Left ventricle myocardium inferior (tissue), 1 donor: ENCODE measurements at regions of chr10 and their contacts with region 1.

Region 1: GRCh38 chr10:76547352-76547972 is 1090.1 kb downstream of the KCNMA1 start:
- DNase-seq: peak; percentile 71
- H3K4me3 ChIP-seq: peak overlapping the region; percentile 20
- H3K27ac ChIP-seq: no peak overlapping the region
- H3K4me1 ChIP-seq: peaks cover 10% of the 10 kb centered on the region
- H3K27me3 ChIP-seq: no peaks in the 10 kb centered on the region
- CTCF ChIP-seq: peak; percentile 88

Region 2: GRCh38 chr10:76311752-76312636 is 235.5 kb before region 1 on chr10:
- intact Hi-C with region 1: loop called (anchors 10 kb)
- DNase-seq: no peak
- H3K4me3 ChIP-seq: no peak overlapping the region
- H3K27ac ChIP-seq: peak overlapping the region; percentile 77
- H3K4me1 ChIP-seq: peaks cover 39% of the 10 kb centered on the region
- H3K27me3 ChIP-seq: no peaks in the 10 kb centered on the region
- CTCF ChIP-seq: peak; percentile 58

Region 3: GRCh38 chr10:76456190-76456589 is 91.3 kb before region 1 on chr10:
- intact Hi-C with region 1: no loop called
- DNase-seq: no peak
- H3K4me3 ChIP-seq: no peak overlapping the region
- H3K27ac ChIP-seq: peak overlapping the region; percentile 52
- H3K4me1 ChIP-seq: peaks cover 28% of the 10 kb centered on the region
- H3K27me3 ChIP-seq: no peaks in the 10 kb centered on the region
- CTCF ChIP-seq: no peak

Region 4: DNA sequence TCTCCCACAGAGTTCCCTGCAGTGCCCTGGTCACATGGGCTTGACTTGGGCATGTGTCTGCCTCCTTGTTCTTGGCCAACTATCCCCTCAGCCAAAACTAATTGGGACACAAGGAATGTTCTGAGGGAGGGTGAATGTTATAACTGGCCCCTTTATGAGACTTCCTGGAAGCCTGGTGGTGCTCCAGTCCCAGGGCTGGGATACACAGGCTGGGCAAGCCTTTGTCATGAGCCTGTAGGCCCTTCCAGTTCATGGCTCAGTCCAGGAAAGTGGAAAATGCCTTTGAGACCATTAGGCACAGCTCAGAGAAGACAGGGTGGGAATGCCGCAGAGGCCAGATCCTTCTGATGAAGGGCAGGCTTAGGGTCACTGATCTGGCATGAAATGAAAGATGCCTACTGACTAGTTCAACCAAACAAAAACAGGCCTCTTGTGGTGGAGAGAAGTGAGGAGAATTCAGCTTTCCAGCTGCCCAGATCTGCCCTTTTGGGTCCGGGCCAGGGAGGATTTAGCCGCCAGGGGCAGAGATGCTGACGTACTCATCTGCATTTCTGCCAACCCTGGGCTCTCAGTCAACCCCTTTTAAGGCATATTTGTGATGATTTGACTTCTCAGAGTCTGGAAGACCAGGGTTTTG is 128.6 kb after region 1 on chr10:
- intact Hi-C with region 1: no loop called
- DNase-seq: peak; percentile 55
- H3K4me3 ChIP-seq: no peak overlapping the region
- H3K27ac ChIP-seq: peak overlapping the region; percentile 63
- H3K4me1 ChIP-seq: no peaks in the 10 kb centered on the region
- H3K27me3 ChIP-seq: peaks cover 6% of the 10 kb centered on the region
- CTCF ChIP-seq: no peak

Region 5: DNA sequence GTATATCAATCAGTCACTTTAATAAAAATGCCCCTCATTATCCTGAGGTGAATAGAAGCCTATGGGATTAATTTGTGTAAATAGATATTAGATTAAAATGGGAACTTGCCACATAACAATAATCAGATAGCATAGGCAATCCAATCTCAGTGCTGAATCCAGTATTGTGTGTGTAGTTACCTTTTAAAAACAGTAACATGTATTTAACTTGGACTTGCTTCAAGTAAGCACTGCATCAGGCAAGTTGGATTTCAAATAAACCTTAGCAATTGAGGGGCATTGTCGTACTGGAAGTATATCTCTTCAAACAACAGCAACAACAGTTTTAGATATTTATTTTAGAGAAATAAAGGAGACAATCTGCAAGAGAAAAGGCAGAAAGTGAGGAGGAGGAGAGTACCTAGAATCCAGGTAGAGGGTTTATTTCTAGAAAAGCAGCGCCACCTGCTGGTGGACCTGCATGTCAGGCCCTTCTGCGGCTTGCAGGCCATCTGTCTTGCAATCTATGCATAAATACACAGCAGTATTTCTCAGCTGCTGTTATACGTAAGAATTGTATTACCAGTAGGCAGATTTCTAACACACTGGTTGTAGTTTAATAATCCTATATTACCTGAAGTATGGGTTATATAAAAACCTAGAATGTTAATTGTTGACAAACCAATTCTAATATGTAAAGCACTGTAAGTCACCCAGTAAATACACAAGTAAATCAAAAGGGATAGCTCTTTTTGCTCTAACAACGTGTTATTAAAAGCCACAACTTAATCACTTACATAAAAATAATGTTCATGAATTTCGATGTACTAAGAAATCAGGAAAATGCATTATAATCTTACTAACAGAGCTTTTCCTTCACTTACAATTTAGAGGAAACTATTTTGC is 437.3 kb after region 1 on chr10:
- intact Hi-C with region 1: loop called (anchors 10 kb)
- DNase-seq: peak; percentile 45
- H3K4me3 ChIP-seq: no peak overlapping the region
- H3K27ac ChIP-seq: no peak overlapping the region
- H3K4me1 ChIP-seq: no peaks in the 10 kb centered on the region
- H3K27me3 ChIP-seq: no peaks in the 10 kb centered on the region
- CTCF ChIP-seq: peak; percentile 93

Region 6: DNA sequence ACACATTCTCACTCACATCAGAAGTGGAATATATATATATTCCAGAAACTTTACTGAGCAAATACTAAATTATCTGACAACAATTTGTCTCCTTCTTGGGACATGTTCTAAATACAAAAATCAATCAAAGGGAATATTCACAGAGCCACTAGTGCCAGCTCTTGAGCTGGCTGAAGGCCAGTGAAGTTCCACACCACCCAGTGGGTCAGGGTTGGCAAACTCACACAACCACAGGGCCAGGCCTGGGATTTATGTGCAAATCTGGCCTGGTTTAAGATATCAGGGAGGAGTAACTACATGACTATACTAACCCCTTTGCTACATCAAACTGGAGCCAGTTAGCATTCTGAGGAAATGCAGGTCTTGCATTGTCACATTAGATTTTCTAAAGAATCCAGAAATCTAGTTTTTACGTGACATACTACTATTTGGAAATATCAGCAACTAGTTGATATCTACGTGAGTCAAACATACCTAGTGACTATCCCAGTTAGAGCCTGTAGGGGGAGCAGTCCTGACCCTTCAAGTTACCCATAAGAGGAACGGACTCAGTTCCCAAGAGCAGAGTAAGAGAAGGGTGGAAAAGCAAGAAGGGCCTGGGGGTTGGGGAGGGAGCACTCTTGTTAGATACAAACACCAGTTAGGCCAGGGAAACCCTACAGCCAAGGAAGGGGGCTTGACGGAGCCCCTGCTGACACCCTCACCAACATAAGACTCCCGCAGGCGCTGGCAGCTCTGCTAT is 489.7 kb after region 1 on chr10:
- intact Hi-C with region 1: no loop called
- DNase-seq: no peak
- H3K4me3 ChIP-seq: no peak overlapping the region
- H3K27ac ChIP-seq: no peak overlapping the region
- H3K4me1 ChIP-seq: no peaks in the 10 kb centered on the region
- H3K27me3 ChIP-seq: peaks cover 49% of the 10 kb centered on the region
- CTCF ChIP-seq: peak; percentile 51